H1 (cell line): ENCODE measurements at regions of chr19 and their contacts with region 1.

Region 1: DNA sequence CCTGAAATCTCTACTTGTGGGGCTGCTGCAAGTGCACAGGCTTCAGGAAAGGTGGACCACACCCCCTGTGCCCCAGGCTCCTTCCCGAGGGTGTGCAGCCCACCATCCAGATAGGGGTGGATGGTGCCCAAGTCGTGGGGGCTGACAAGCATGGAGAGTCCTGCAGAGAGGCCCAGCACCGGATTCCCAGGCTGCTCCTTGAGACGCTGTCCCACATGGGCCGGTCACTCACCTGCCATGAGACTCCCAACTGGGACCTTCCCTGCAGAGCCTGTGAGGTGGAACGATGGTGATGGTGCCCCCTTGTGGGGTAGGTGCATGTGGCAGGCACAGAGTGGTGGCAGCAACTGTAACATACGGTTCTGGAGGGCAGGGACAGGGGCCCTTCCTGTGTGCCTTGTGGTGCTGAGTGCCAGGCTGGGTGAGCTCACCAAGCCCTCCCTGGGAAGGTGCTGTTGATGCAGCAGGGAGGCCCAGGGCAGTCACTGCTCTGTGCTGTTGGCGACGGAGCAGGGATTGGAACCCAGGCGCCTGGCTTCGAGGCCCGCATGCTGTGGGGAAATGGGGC is 33.0 kb downstream of the PPP1R37 start:
- DNase-seq: peak; percentile 56 to 96
- H3K4me3 ChIP-seq: no peak overlapping the region
- H3K27ac ChIP-seq: no peak overlapping the region
- H3K4me1 ChIP-seq: peaks cover 0 to 10% (median 7%) of the 10 kb centered on the region in 4 experiments; a peak in 6 of 7 replicates
- H3K27me3 ChIP-seq: no peaks in the 10 kb centered on the region
- CTCF ChIP-seq: peak; percentile 83 to 99 (median 98)
- EP300 ChIP-seq: no peak
- POLR2A ChIP-seq: no peak
- RAD21 ChIP-seq: peak; percentile 78 to 86

Region 2: GRCh38 chr19:45079063-45079910 is 46.7 kb before region 1 on chr19 and contains the start of gene GEMIN7:
- CTCF ChIA-PET with region 1: interaction called, 12 read pairs
- POLR2A ChIA-PET with region 1: interaction called, 4 read pairs
- DNase-seq: peak in 1 of 2 experiments; percentile 92
- H3K4me3 ChIP-seq: peak within 1 kb of the TSS; percentile 87 to 98 (median 94)
- H3K27ac ChIP-seq: peak within 1 kb of the TSS; percentile 94
- H3K4me1 ChIP-seq: peaks cover 13 to 37% (median 20%) of the 10 kb centered on the region in 4 experiments
- H3K27me3 ChIP-seq: no peaks in the 10 kb centered on the region
- CTCF ChIP-seq: peak in 2 of 3 experiments; percentile 6 to 34; a peak in 3 of 4 replicates
- EP300 ChIP-seq: peak in 1 of 2 experiments; percentile 93; a peak in 1 of 3 replicates
- POLR2A ChIP-seq: peak in 1 of 2 experiments; percentile 51; a peak in 1 of 3 replicates
- RAD21 ChIP-seq: no peak; a peak in 1 of 4 replicates
- total RNA-seq, gene GEMIN7: 48.0 and 48.5 TPM in 2 replicates

Region 3: DNA sequence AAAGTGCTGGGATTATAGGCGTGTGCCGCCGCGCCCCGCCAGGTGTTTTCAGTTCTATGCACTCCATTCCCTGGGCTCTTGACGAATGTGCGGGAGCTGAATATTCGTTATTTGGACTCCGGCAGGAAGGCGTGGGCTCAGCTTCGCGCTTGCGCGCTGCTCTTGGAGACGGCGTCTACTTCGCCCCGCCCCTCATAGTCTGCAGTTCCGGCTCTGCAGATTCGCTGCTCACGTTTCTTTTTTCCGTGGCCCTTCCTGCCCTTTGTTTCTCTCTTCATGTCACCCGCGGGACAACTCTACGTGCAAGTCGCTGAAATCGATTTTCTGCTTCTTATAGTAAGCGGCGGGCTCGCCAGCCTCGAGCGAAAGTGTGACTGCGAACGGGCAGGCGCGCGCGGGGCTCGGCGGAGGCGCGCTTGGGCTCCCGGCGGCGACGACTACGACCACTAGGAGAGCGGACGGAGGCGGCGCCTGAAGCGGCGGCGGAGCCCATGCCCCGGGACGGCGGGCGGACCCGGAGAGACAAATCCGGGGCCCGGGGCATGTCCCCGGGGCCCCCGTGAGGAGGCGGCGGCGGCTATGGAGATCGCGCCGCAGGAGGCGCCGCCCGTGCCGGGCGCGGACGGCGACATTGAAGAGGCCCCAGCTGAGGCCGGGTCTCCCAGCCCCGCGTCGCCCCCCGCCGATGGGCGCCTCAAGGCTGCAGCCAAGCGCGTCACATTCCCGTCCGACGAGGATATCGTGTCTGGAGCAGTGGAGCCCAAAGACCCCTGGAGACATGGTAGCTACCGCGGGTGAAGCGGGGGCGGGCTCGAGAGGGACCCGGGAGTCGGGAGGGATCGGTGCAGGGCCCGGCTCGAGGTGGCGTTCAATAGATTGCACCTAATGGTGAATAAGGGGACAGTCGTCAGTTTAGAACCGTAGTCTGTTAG is 33.0 kb before region 1 on chr19 and contains the start of gene PPP1R37:
- CTCF ChIA-PET with region 1: interaction called, 57 read pairs
- POLR2A ChIA-PET with region 1: interaction called, 21 read pairs
- DNase-seq: peak; percentile 89 to 90
- H3K4me3 ChIP-seq: peak within 1 kb of the TSS; percentile 73 to 97 (median 86)
- H3K27ac ChIP-seq: peak within 1 kb of the TSS; percentile 98
- H3K4me1 ChIP-seq: peaks cover 6 to 25% (median 12%) of the 10 kb centered on the region in 4 experiments
- H3K27me3 ChIP-seq: no peaks in the 10 kb centered on the region
- CTCF ChIP-seq: peak in 2 of 3 experiments; percentile 5 to 20; a peak in 2 of 4 replicates
- EP300 ChIP-seq: peak; percentile 3 to 94; a peak in 2 of 3 replicates
- POLR2A ChIP-seq: no peak; a peak in 1 of 3 replicates
- RAD21 ChIP-seq: no peak
- total RNA-seq, gene PPP1R37: 25.7 and 27.0 TPM in 2 replicates

Region 4: DNA sequence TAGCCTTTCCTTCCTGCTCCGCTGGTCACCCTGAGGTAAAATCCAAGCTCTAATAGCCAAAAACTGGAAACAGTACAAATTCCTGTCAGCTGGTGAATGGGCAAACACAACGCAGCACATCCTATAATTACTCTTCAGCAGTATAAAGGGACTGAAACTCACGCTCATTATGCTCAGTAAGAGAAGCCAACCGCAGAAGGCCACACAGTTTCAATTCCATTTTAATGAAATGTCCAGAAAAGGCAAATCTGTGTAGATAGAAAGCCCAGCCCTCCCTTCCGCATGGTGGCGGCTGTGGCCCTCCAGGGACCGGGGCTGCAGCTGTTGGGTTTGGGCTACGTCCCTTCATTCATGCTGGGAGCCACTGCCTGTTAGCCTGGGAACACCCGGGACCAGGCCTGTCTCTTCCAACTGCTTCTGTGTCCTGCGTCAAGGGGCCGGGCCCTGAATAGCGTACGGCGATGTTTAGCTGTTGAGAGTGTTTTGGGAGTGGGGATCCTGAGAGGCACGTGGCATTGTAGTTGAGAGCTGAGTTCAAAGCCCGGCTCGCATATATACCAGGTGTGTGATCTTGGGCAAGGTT is 11.3 kb after region 1 on chr19:
- CTCF ChIA-PET with region 1: interaction called, 44 read pairs
- POLR2A ChIA-PET with region 1: interaction called, 6 read pairs
- DNase-seq: no peak
- H3K4me3 ChIP-seq: no peak overlapping the region
- H3K27ac ChIP-seq: no peak overlapping the region
- H3K4me1 ChIP-seq: peaks cover 0 to 18% (median 8%) of the 10 kb centered on the region in 4 experiments; a peak in 5 of 7 replicates
- H3K27me3 ChIP-seq: no peaks in the 10 kb centered on the region
- CTCF ChIP-seq: no peak
- EP300 ChIP-seq: no peak
- POLR2A ChIP-seq: no peak
- RAD21 ChIP-seq: no peak

Region 5: DNA sequence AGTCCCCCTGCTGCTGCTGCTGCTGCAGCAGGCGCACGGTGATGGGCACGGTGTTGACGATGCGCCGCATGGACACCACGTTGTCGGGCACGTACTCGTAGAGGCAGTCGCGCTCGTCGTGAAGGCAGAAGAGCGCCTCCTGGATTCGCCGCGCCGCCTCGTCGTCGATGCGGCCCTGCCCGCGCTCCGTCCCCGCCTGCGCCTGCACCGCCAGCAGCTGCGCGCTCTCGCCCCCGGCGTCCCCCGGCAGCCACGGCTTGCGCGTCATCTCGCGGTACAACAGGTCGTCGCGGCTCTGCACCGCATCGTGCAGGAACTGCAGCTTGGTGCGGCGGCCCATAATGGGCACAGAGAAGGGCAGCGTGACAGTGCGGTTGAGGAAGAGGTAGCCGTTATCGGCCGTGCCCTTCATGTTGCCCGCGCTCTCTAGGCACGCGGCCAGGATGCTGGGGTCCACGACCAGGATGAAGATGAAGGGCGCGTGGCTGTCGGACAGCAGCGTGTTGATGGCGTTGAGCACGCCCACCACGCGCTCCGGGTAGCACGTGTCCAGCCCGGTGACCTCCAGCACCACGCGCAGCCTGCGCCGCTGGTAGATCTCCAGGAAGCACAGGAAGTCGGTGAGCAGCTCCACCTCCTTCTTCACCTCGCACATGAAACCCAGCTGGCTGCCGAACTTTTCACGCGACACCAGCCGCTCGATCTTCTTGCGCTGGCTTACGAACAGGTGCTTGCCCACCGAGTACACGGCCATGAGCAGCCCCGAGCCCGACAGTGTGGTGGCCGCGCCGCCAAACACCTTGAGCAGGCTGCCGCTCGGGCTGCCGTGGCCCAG is 26.7 kb after region 1 on chr19:
- CTCF ChIA-PET with region 1: interaction called, 22 read pairs
- POLR2A ChIA-PET with region 1: interaction called, 6 read pairs
- DNase-seq: peak in 1 of 2 experiments; percentile 75
- H3K4me3 ChIP-seq: peak overlapping the region in 2 of 4 experiments; percentile 7 to 49; a peak in 2 of 8 replicates
- H3K27ac ChIP-seq: no peak overlapping the region
- H3K4me1 ChIP-seq: peaks cover 0 to 13% (median 3%) of the 10 kb centered on the region in 4 experiments; a peak in 6 of 7 replicates
- H3K27me3 ChIP-seq: peaks cover 16 to 45% (median 39%) of the 10 kb centered on the region in 4 experiments
- CTCF ChIP-seq: peak; percentile 33 to 57 (median 41)
- EP300 ChIP-seq: no peak
- POLR2A ChIP-seq: no peak
- RAD21 ChIP-seq: no peak; a peak in 1 of 4 replicates

Region 6: DNA sequence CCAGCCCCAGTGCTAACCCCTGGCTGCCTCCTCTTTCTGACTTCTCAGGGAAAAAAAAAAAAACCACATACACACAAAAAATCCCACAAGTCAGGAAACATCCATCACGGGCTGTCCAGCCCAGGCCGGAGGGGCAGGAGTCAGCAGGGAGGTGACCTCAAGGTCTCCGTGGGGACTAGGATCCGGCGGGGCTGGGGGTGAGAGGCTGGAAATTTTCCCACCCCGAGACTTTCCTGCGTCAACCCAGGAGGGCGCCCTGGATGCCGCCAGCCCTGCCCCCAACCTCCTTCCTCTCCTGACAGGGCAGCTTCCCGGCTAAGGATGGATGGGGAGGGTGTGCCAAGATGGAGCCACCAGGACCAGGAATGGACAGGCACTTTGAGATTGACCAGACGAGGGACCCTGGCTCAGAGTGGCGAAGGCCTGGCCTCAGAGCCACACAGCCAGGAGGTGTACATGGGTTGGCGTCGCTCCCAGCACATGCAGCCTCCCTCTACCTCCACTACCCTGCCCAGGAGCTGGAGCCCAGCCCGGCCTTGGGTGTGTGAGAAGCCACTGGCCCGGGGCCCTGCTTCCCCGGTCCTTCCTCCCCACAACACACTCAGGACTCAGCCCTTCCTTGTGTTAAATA is 85.9 kb after region 1 on chr19:
- CTCF ChIA-PET with region 1: no interaction called
- POLR2A ChIA-PET with region 1: no interaction called
- DNase-seq: no peak
- H3K4me3 ChIP-seq: no peak overlapping the region
- H3K27ac ChIP-seq: no peak overlapping the region
- H3K4me1 ChIP-seq: peaks cover 0 to 8% (median 1%) of the 10 kb centered on the region in 4 experiments; a peak in 3 of 7 replicates
- H3K27me3 ChIP-seq: peaks cover 6 to 24% (median 17%) of the 10 kb centered on the region in 4 experiments
- CTCF ChIP-seq: no peak
- EP300 ChIP-seq: no peak
- POLR2A ChIP-seq: no peak
- RAD21 ChIP-seq: no peak